ENCODE measurements at regions of chr17 and their contacts with region 1.

Region 1: GRCh38 chr17:1488030-1488863 is 4.2 kb downstream of the MYO1C start:
- DNase-seq: peak in 8 of 9 experiments; percentile 62 to 87 (median 77)
- ATAC-seq: peak; percentile 42
- H3K4me3 ChIP-seq: peak overlapping the region; percentile 53 to 63
- H3K4me3 Mint-ChIP-seq: peak overlapping the region; percentile 86
- H3K27ac ChIP-seq: no peak overlapping the region
- H3K27ac Mint-ChIP-seq: peak overlapping the region; percentile 52
- H3K4me1 ChIP-seq: peaks cover 38% of the 10 kb centered on the region
- H3K4me1 Mint-ChIP-seq: peaks cover 27% of the 10 kb centered on the region
- H3K27me3 ChIP-seq: peaks cover 0 to 3% of the 10 kb centered on the region in 2 experiments
- H3K27me3 Mint-ChIP-seq: no peaks in the 10 kb centered on the region
- CTCF ChIP-seq: no peak

Region 2: GRCh38 chr17:1251866-1252608 is 236.2 kb before region 1 on chr17:
- CTCF ChIA-PET with region 1: no interaction called
- POLR2A ChIA-PET with region 1: no interaction called
- intact Hi-C with region 1: no loop called
- DNase-seq: no peak
- ATAC-seq: no peak
- H3K4me3 ChIP-seq: no peak overlapping the region
- H3K4me3 Mint-ChIP-seq: peak overlapping the region; percentile 18
- H3K27ac ChIP-seq: no peak overlapping the region
- H3K27ac Mint-ChIP-seq: no peak overlapping the region
- H3K4me1 ChIP-seq: peaks cover 9% of the 10 kb centered on the region
- H3K4me1 Mint-ChIP-seq: peaks cover 13% of the 10 kb centered on the region
- H3K27me3 ChIP-seq: no peaks in the 10 kb centered on the region
- H3K27me3 Mint-ChIP-seq: peaks cover 8% of the 10 kb centered on the region
- CTCF ChIP-seq: no peak

Region 3: GRCh38 chr17:1399679-1400512 is 88.4 kb before region 1 on chr17 and contains the start of gene YWHAE:
- CTCF ChIA-PET with region 1: no interaction called
- POLR2A ChIA-PET with region 1: interaction called, 5 read pairs
- intact Hi-C with region 1: loop called in 1 of 2 experiments (anchors 1 kb)
- DNase-seq: peak; percentile 87 to 97 (median 96)
- ATAC-seq: peak; percentile 86
- H3K4me3 ChIP-seq: peak within 1 kb of the TSS; percentile 100
- H3K4me3 Mint-ChIP-seq: peak within 1 kb of the TSS; percentile 99
- H3K27ac ChIP-seq: peak within 1 kb of the TSS; percentile 94 to 98
- H3K27ac Mint-ChIP-seq: peak within 1 kb of the TSS; percentile 98
- H3K4me1 ChIP-seq: peaks cover 25% of the 10 kb centered on the region
- H3K4me1 Mint-ChIP-seq: peaks cover 41% of the 10 kb centered on the region
- H3K27me3 ChIP-seq: no peaks in the 10 kb centered on the region
- H3K27me3 Mint-ChIP-seq: no peaks in the 10 kb centered on the region
- CTCF ChIP-seq: no peak
- total RNA-seq, gene YWHAE: 125 to 134 TPM

Region 4: GRCh38 chr17:1431631-1432104 is 56.6 kb before region 1 on chr17:
- CTCF ChIA-PET with region 1: no interaction called
- POLR2A ChIA-PET with region 1: no interaction called
- intact Hi-C with region 1: no loop called
- DNase-seq: no peak
- ATAC-seq: no peak
- H3K4me3 ChIP-seq: no peak overlapping the region
- H3K4me3 Mint-ChIP-seq: no peak overlapping the region
- H3K27ac ChIP-seq: no peak overlapping the region
- H3K27ac Mint-ChIP-seq: peak overlapping the region; percentile 29
- H3K4me1 ChIP-seq: no peaks in the 10 kb centered on the region
- H3K4me1 Mint-ChIP-seq: peaks cover 29% of the 10 kb centered on the region
- H3K27me3 ChIP-seq: no peaks in the 10 kb centered on the region
- H3K27me3 Mint-ChIP-seq: no peaks in the 10 kb centered on the region
- CTCF ChIP-seq: no peak

Region 5: DNA sequence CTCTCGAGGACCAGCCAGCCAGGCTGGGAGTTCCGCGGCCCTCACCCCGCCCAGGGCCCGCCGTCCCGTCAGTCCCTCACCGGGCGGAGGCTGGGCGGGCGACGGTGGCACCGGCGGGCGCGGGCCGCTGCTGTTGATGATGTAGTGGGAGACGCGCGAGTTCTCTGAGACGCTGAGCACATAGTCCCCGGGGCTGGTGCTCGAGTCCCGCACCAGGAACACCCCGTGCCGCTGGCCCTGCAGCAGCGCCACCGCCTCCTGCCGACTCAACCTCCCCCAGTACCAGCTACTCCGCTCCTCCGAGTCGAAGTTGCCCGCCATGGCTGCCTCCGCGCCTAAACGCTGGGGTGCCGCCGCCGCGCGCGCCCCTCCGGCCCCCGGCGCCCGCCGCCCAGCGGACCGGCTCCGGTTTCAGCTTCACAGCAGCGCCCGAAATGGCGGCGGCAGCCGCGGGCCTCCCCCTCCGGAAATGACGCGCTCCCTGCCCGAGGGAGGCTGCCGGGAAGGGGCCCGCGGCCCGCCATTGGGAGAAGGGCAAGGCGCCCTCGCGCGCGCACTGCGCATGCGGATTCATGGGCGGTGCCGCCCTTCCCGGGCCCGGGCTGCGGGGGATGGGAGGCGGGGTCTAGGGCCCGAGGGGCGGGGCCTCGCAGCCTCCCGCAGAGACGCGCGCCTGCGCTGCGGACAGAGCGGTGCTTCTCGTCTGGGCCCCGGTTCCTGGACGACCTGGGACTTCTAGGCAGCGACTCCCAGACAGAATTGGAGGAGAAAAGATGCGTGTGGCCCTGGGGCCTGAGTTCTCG is 32.2 kb before region 1 on chr17 and contains the start of gene CRK:
- CTCF ChIA-PET with region 1: interaction called, 3 read pairs
- POLR2A ChIA-PET with region 1: interaction called, 7 read pairs
- intact Hi-C with region 1: loop called (anchors 1 kb)
- DNase-seq: peak; percentile 95 to 100 (median 99)
- ATAC-seq: peak; percentile 95
- H3K4me3 ChIP-seq: peak within 1 kb of the TSS; percentile 80 to 94
- H3K4me3 Mint-ChIP-seq: peak within 1 kb of the TSS; percentile 92
- H3K27ac ChIP-seq: peak within 1 kb of the TSS; percentile 92 to 93
- H3K27ac Mint-ChIP-seq: peak within 1 kb of the TSS; percentile 91
- H3K4me1 ChIP-seq: peaks cover 43% of the 10 kb centered on the region
- H3K4me1 Mint-ChIP-seq: peaks cover 46% of the 10 kb centered on the region
- H3K27me3 ChIP-seq: peaks cover 0 to 10% of the 10 kb centered on the region in 2 experiments
- H3K27me3 Mint-ChIP-seq: peaks cover 10% of the 10 kb centered on the region
- CTCF ChIP-seq: no peak
- total RNA-seq, gene CRK: 15.4 to 15.9 TPM

Region 6: DNA sequence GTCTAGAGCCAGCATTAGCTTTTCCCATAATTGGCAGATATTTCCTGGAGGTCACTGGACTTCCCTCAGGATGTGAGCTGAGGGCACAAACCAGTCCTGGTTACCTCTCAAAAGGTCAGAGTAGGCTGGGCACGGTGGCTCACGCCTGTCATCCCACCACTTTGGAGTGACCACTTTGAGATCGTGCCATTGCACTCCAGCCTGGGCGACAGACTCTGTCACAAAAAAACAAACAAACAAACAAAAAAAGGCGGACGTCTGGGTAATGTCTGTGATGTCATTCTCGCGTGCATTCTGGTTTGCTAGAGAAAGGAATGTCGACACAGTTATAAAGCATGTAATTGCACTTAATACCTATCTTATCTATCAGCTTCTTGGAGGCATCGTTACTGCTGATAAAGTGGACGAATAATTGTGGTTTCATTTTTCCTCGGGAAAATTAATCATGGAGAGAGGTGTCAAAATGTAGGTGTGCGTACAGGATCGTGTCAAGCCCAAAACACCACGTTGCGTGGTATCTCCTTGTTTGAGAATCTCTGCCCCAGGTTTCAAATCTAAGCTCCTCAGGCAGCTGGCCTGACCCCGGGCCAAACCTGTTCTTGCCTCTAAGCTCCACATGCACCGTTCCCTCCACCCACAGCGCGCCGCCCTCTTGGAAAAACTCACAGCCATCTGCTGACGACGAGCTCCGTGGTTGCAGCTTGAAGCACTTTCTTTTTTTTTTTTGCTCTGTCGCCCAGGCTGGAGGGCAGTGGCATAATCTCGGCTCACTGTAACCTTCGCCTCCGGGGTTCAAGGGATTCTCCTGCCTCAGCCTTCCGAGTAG is 25.7 kb before region 1 on chr17:
- CTCF ChIA-PET with region 1: interaction called, 3 read pairs
- POLR2A ChIA-PET with region 1: interaction called, 4 read pairs
- intact Hi-C with region 1: loop called (anchors 1 kb)
- DNase-seq: peak in 2 of 9 experiments; percentile 23 to 27
- ATAC-seq: no peak
- H3K4me3 ChIP-seq: no peak overlapping the region
- H3K4me3 Mint-ChIP-seq: peak overlapping the region; percentile 51
- H3K27ac ChIP-seq: no peak overlapping the region
- H3K27ac Mint-ChIP-seq: peak overlapping the region; percentile 55
- H3K4me1 ChIP-seq: peaks cover 39% of the 10 kb centered on the region
- H3K4me1 Mint-ChIP-seq: peaks cover 30% of the 10 kb centered on the region
- H3K27me3 ChIP-seq: peaks cover 0 to 10% of the 10 kb centered on the region in 2 experiments
- H3K27me3 Mint-ChIP-seq: peaks cover 7% of the 10 kb centered on the region
- CTCF ChIP-seq: no peak

Region 7: DNA sequence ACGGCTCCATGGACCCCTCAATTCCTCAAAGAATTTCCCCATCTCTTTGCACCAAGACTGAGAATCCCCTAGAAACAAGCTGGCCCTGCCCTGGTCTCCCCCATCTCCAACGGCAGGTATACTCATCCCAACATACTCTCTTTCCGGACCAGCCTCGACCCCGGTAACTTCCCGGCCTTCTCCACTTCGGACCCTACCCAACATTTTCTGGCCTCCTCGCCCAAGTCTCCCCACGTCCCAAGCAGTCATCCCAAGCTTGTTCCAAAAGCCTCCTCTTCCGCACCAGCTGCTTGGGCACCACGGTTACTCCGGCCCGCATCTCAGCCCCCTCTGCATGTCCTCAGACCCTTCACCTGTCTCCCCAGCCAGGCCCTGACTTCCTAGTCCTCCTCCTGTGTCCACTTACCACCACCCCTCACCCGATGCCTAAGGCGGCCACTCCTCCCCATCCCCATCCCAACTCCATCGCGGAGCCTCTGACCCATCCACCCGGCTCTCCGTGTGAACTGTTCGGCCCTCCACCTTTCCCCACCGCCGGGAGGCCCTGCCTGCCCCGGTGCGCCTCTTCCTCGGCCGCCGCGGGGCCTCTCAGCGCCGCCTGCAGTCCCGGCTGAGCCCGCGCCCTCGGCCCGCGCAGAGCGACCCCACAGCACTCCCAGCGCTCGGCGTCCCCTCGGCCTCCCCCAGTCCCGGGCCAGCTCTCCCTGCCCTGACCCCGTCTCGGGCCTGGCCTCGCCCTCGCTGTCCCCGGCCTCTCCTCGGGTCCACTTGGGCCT is 73.3 kb after region 1 on chr17:
- CTCF ChIA-PET with region 1: no interaction called
- POLR2A ChIA-PET with region 1: no interaction called
- intact Hi-C with region 1: loop called in 1 of 2 experiments (anchors 2 kb)
- DNase-seq: peak in 8 of 9 experiments; percentile 16 to 62 (median 34)
- ATAC-seq: peak; percentile 35
- H3K4me3 ChIP-seq: peak overlapping the region; percentile 40 to 41
- H3K4me3 Mint-ChIP-seq: peak overlapping the region; percentile 83
- H3K27ac ChIP-seq: peak overlapping the region in 1 of 2 experiments; percentile 40
- H3K27ac Mint-ChIP-seq: peak overlapping the region; percentile 66
- H3K4me1 ChIP-seq: peaks cover 19% of the 10 kb centered on the region
- H3K4me1 Mint-ChIP-seq: peaks cover 45% of the 10 kb centered on the region
- H3K27me3 ChIP-seq: no peaks in the 10 kb centered on the region
- H3K27me3 Mint-ChIP-seq: no peaks in the 10 kb centered on the region
- CTCF ChIP-seq: peak; percentile 38

Measured in CD8-positive, alpha-beta T cell (primary cell).